ENCODE measurements at regions of chr12 and their contacts with region 1.

Region 1: GRCh38 chr12:32671930-32672780 is 6.9 kb upstream of the DNM1L start:
- H3K4me3 ChIP-seq: no peak overlapping the region
- H3K27ac ChIP-seq: no peak overlapping the region
- H3K4me1 ChIP-seq: no peaks in the 10 kb centered on the region
- CTCF ChIP-seq: peak; percentile 59; the same call in 1 of the 2 replicates

Region 2: GRCh38 chr12:32365473-32366064 is 306.6 kb before region 1 on chr12:
- CTCF ChIA-PET with region 1: interaction called, 15 read pairs
- POLR2A ChIA-PET with region 1: no interaction called
- H3K4me3 ChIP-seq: no peak overlapping the region
- H3K27ac ChIP-seq: no peak overlapping the region
- H3K4me1 ChIP-seq: no peaks in the 10 kb centered on the region
- CTCF ChIP-seq: peak; percentile 55; the same call in 1 of the 2 replicates

Region 3: DNA sequence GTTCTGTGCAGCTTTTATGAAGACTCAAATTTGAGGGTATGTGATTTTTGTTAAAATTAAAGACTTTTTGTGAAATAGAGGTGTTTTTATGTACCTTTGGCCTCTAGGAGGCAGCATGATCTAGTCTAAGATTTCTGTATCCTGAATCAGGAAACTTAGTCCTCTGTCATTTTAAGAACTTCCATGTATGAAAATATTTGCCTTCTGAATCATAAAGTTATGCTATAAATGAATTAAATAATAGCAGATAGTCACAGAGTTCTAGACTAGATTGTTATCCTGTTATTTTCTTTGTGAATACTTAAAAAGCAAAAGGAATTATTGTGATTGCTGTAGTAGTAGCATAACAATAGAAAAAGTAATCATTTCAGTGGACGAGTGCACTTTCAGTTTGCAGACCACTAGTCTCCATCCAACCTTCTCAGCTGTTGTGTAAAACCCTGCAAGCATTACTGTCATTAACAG is 216.5 kb before region 1 on chr12:
- CTCF ChIA-PET with region 1: interaction called, 37 read pairs
- POLR2A ChIA-PET with region 1: no interaction called
- H3K4me3 ChIP-seq: peak overlapping the region; percentile 17
- H3K27ac ChIP-seq: no peak overlapping the region
- H3K4me1 ChIP-seq: no peaks in the 10 kb centered on the region
- CTCF ChIP-seq: peak; percentile 17; the same call in 1 of the 2 replicates

Region 4: GRCh38 chr12:32692358-32692757 is 20.2 kb after region 1 on chr12:
- CTCF ChIA-PET with region 1: no interaction called
- POLR2A ChIA-PET with region 1: no interaction called
- H3K4me3 ChIP-seq: no peak overlapping the region
- H3K27ac ChIP-seq: no peak overlapping the region
- H3K4me1 ChIP-seq: peaks cover 15% of the 10 kb centered on the region
- CTCF ChIP-seq: no peak

Region 5: GRCh38 chr12:32737715-32738114 is 65.6 kb after region 1 on chr12:
- CTCF ChIA-PET with region 1: no interaction called
- POLR2A ChIA-PET with region 1: no interaction called
- H3K4me3 ChIP-seq: no peak overlapping the region
- H3K27ac ChIP-seq: no peak overlapping the region
- H3K4me1 ChIP-seq: no peaks in the 10 kb centered on the region
- CTCF ChIP-seq: no peak

Region 6: DNA sequence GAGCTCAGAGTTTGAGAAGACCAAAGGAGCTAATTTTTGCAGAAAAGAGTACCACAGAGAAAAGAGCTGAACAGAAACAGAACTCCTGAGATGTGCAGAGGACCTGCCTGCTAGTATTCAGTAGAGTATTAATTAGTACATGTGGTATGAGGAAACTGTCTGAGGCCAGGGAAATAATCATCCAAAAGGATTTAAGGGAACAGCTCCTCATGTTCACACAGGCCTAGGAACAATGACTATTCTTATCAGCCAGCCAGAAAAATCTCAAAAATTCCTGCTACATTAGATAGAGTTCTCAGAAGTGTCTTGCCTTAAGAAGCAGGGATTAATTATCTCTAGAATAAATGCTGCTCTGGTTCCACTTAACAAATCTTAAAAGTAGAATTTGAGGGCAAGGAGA is 188.0 kb after region 1 on chr12:
- CTCF ChIA-PET with region 1: no interaction called
- POLR2A ChIA-PET with region 1: no interaction called
- H3K4me3 ChIP-seq: no peak overlapping the region
- H3K27ac ChIP-seq: no peak overlapping the region
- H3K4me1 ChIP-seq: 0 out of 2 replicates have a peak, but pooled peaks cover 2% of the 10 kb centered on the region
- CTCF ChIP-seq: no peak